IMR-90 (cell line): ENCODE measurements at regions of chr9 and their contacts with region 1.

Region 1: GRCh38 chr9:100598641-100599145 is 20.8 kb downstream of the CAVIN4 start:
- DNase-seq: peak; percentile 71
- ATAC-seq: peak; percentile 93
- H3K4me3 ChIP-seq: peak overlapping the region; percentile 47
- H3K27ac ChIP-seq: no peak overlapping the region
- H3K4me1 ChIP-seq: peaks cover 1% of the 10 kb centered on the region; the same call in 1 of the 2 replicates
- H3K27me3 ChIP-seq: no peaks in the 10 kb centered on the region; the same call in 1 of the 2 replicates
- CTCF ChIP-seq: no peak
- POLR2A ChIP-seq: no peak
- RAD21 ChIP-seq: no peak

Region 2: GRCh38 chr9:99807276-99807852 is 791.3 kb before region 1 on chr9:
- CTCF ChIA-PET with region 1: no interaction called
- POLR2A ChIA-PET with region 1: no interaction called
- dilution Hi-C with region 1: no loop called
- in situ Hi-C with region 1: no loop called
- intact Hi-C with region 1: loop called (anchors 5 kb)
- DNase-seq: peak; percentile 59
- ATAC-seq: peak; percentile 82
- H3K4me3 ChIP-seq: no peak overlapping the region
- H3K27ac ChIP-seq: no peak overlapping the region
- H3K4me1 ChIP-seq: no peaks in the 10 kb centered on the region
- H3K27me3 ChIP-seq: no peaks in the 10 kb centered on the region
- CTCF ChIP-seq: peak; percentile 82
- POLR2A ChIP-seq: no peak
- RAD21 ChIP-seq: peak; percentile 65

Region 3: GRCh38 chr9:100098887-100099721 is 499.6 kb before region 1 on chr9 and contains the starts of genes ERP44 and INVS:
- CTCF ChIA-PET with region 1: no interaction called
- POLR2A ChIA-PET with region 1: no interaction called
- dilution Hi-C with region 1: no loop called
- in situ Hi-C with region 1: no loop called
- intact Hi-C with region 1: loop called (anchors 10 kb)
- DNase-seq: peak; percentile 99
- ATAC-seq: peak; percentile 99
- H3K4me3 ChIP-seq: peak within 1 kb of the TSS; percentile 88
- H3K27ac ChIP-seq: peak within 1 kb of the TSS; percentile 77
- H3K4me1 ChIP-seq: peaks cover 2% of the 10 kb centered on the region; the same call in 1 of the 2 replicates
- H3K27me3 ChIP-seq: no peaks in the 10 kb centered on the region
- CTCF ChIP-seq: no peak
- POLR2A ChIP-seq: peak; percentile 89
- RAD21 ChIP-seq: no peak
- total RNA-seq, gene ERP44: 9.1 and 16.1 TPM in 2 replicates
- total RNA-seq, gene INVS: 25.3 and 33.5 TPM in 2 replicates

Region 4: GRCh38 chr9:100222674-100223073 is 376.0 kb before region 1 on chr9:
- CTCF ChIA-PET with region 1: no interaction called
- POLR2A ChIA-PET with region 1: no interaction called
- dilution Hi-C with region 1: no loop called
- in situ Hi-C with region 1: no loop called
- intact Hi-C with region 1: loop called (anchors 5 kb)
- DNase-seq: peak; percentile 53
- ATAC-seq: 0 out of 2 replicates have a peak, but pooled peaks have one; percentile 27
- H3K4me3 ChIP-seq: no peak overlapping the region
- H3K27ac ChIP-seq: no peak overlapping the region
- H3K4me1 ChIP-seq: peaks cover 2% of the 10 kb centered on the region
- H3K27me3 ChIP-seq: no peaks in the 10 kb centered on the region
- CTCF ChIP-seq: peak; percentile 61
- POLR2A ChIP-seq: no peak
- RAD21 ChIP-seq: peak; percentile 64

Region 5: DNA sequence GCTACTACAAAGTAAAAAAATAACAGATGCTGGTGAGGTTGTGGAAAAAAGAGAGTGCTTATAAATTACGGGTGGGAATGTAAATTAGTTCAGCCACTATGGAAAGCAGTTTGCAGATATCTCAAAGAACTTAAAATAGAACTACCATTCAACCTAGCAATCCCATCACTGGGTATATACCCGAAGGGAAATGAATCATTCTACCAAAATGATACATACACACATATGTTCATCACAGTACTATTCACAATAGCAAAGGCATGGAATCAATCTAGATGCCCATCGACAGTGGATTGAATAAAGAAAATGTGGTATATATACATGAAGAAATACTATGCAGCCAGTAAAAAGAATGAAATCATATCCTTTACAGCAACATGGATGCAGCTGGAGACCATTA is 239.6 kb before region 1 on chr9:
- CTCF ChIA-PET with region 1: no interaction called
- POLR2A ChIA-PET with region 1: no interaction called
- dilution Hi-C with region 1: no loop called
- in situ Hi-C with region 1: no loop called
- intact Hi-C with region 1: no loop called
- DNase-seq: no peak
- ATAC-seq: no peak
- H3K4me3 ChIP-seq: no peak overlapping the region
- H3K27ac ChIP-seq: no peak overlapping the region
- H3K4me1 ChIP-seq: no peaks in the 10 kb centered on the region
- H3K27me3 ChIP-seq: no peaks in the 10 kb centered on the region
- CTCF ChIP-seq: no peak
- POLR2A ChIP-seq: no peak
- RAD21 ChIP-seq: no peak

Region 6: DNA sequence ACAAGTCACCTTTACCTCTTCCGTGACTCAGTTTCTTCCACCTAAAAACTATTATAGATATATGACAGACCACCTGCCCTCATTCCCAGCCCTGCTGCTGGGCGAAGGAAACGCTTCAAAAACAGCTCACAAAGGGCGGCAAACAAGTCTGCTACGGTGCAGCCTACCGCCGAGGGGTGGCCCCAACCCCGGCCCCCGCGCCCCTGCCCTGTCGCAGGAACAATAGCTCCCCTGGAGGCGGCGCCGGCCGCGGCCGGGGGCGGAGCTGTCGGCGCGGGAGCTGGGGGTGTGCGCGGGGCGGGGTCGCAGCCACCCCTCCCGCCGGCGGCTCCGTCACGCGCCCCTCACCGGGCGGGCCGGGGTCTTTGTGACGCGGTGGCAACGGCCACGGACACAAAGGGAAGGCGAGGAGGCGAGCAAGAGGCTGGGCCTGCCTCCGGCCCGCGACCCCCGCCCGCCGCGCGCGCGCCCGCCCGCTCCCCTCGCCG is 125.9 kb before region 1 on chr9 and contains the start of gene TMEFF1:
- CTCF ChIA-PET with region 1: no interaction called
- POLR2A ChIA-PET with region 1: no interaction called
- dilution Hi-C with region 1: no loop called
- in situ Hi-C with region 1: no loop called
- intact Hi-C with region 1: loop called (anchors 2 kb)
- DNase-seq: peak; percentile 26
- ATAC-seq: peak; percentile 85
- H3K4me3 ChIP-seq: peak within 1 kb of the TSS; percentile 90
- H3K27ac ChIP-seq: peak within 1 kb of the TSS; percentile 11; the same call in 1 of the 2 replicates
- H3K4me1 ChIP-seq: no peaks in the 10 kb centered on the region
- H3K27me3 ChIP-seq: no peaks in the 10 kb centered on the region
- CTCF ChIP-seq: peak; percentile 29
- POLR2A ChIP-seq: no peak
- RAD21 ChIP-seq: no peak
- total RNA-seq, gene TMEFF1: 0.90 and 1.9 TPM in 2 replicates

Region 7: GRCh38 chr9:100567856-100568255 is 30.8 kb before region 1 on chr9:
- CTCF ChIA-PET with region 1: no interaction called
- POLR2A ChIA-PET with region 1: no interaction called
- dilution Hi-C with region 1: no loop called
- in situ Hi-C with region 1: no loop called
- intact Hi-C with region 1: no loop called
- DNase-seq: no peak
- ATAC-seq: no peak
- H3K4me3 ChIP-seq: no peak overlapping the region
- H3K27ac ChIP-seq: no peak overlapping the region
- H3K4me1 ChIP-seq: no peaks in the 10 kb centered on the region
- H3K27me3 ChIP-seq: no peaks in the 10 kb centered on the region
- CTCF ChIP-seq: no peak
- POLR2A ChIP-seq: no peak
- RAD21 ChIP-seq: no peak

Region 8: DNA sequence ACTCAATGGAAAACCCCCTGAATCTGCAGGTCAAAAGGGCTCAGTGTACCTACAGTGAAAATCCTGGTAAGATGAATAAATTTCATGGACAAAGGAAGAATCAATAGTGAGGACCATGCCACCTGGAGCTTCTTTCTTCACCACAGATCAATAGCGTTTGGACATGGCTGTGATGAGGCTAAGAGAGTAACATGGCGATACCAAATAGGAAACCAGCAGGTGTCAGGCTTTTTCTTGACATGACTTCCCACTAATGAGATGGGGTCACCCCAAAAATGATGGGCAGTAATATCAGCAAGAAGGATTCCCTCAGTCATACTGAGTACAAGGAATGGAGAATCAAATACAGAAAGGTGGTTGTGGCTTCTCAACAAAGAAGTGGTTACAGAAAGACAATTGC is 221.3 kb after region 1 on chr9:
- CTCF ChIA-PET with region 1: no interaction called
- POLR2A ChIA-PET with region 1: no interaction called
- dilution Hi-C with region 1: no loop called
- in situ Hi-C with region 1: no loop called
- intact Hi-C with region 1: no loop called
- DNase-seq: no peak
- ATAC-seq: no peak
- H3K4me3 ChIP-seq: no peak overlapping the region
- H3K27ac ChIP-seq: no peak overlapping the region
- H3K4me1 ChIP-seq: no peaks in the 10 kb centered on the region
- H3K27me3 ChIP-seq: no peaks in the 10 kb centered on the region
- CTCF ChIP-seq: no peak
- POLR2A ChIP-seq: no peak
- RAD21 ChIP-seq: no peak

Region 9: GRCh38 chr9:101311758-101312420 is 713.2 kb after region 1 on chr9:
- CTCF ChIA-PET with region 1: interaction called, 38 read pairs
- POLR2A ChIA-PET with region 1: no interaction called
- dilution Hi-C with region 1: no loop called
- in situ Hi-C with region 1: no loop called
- intact Hi-C with region 1: loop called (anchors 1 kb)
- DNase-seq: peak; percentile 84
- ATAC-seq: peak; percentile 72
- H3K4me3 ChIP-seq: no peak overlapping the region
- H3K27ac ChIP-seq: no peak overlapping the region
- H3K4me1 ChIP-seq: no peaks in the 10 kb centered on the region
- H3K27me3 ChIP-seq: peaks cover 1% of the 10 kb centered on the region; the same call in 1 of the 2 replicates
- CTCF ChIP-seq: peak; percentile 82
- POLR2A ChIP-seq: no peak
- RAD21 ChIP-seq: peak; percentile 81